Cardiac septum (tissue), 1 donor: ENCODE measurements at regions of chr3 and their contacts with region 1.

Region 1: DNA sequence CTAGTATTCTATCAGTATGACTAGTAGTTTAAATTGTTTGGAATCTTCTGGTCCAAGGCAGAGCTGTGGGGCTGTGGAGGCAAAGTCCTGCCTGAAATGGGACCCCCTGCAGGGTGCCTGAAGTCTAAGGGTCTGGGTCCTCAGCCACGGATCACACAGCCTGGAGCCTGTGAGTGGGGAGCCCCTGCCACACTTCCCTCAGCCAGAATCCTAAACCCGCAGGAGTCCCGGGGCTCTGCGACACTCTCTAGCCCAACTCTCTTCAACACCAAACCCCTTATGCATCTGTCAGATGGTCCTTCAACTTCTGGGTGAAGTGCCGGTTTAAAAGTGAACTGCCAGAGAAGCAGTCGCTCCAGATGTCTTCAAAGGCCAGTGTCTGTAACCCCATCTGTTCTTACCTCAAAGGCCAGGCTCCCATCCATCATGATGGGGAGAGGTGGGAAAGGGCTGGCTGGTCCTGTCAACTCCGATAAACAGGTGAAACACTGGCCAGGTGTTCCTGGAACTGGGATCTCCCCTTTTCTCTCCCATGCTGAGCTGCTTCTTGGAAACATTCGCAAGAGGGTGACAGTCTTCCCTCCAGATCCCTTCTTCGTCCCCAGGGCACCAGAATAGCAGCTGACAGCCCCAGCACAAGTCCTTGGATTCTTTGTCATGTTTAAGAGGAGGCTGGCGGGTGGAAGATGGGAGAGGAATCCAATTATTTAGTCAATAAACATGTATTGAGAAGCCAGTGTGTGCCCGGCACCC is 45.6 kb downstream of the CPN2 start:
- DNase-seq: peak; percentile 35

Region 2: DNA sequence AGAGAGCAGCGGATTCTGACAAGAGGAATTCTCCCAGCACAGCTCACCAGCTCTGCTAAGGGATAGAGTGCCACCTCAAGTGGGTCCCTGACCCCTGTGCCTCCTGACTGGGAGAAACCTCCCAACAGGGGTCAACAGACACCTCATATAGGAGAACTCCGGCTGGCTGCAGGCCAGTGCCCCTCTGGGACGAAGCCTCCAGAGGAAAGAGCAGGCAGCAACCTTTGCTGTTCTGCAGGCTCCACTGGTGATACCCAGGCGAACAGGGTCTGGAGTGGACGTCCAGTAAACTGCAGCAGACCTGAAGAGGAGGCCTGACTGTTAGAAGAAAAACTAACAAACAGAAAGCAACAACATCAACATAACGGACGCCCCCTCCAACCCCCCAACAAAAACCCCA is 1546.9 kb before region 1 on chr3:
- intact Hi-C with region 1: no loop called
- DNase-seq: no peak

Region 3: DNA sequence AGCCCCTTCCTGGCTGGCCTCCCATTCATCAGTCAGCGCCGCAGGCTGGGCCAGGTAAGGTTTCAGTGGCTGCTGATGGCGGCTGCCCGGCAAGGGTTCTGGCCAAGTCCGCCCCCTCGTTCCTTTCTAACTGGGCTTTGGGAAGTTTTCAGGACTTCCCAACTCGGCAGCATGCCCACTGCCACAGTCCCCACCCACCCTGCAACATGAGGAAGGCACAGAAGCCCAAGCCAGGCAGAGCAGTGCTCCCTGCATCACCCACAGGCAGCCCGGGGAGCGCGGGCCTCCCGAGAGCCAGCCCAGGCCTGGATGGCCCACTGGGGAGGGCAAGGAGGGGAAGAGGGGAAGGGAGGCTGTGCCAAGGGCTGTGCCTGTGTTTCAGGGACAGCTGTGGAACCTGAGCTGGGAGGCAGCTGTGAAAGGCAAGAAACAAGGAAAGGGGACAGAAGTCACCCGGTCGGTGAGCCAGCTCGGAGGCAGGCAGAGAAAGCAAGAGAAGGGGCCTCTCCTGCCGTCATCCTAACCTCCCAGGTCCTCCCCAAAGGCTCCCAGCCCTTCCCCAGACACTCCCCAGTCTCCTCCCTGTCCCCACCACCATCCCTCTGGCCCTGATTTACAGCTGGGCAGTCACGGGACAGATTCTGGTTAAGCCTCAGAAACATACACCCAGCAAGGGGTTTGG is 28.3 kb before region 1 on chr3:
- intact Hi-C with region 1: loop called (anchors 2 kb)
- DNase-seq: peak; percentile 76

Region 4: DNA sequence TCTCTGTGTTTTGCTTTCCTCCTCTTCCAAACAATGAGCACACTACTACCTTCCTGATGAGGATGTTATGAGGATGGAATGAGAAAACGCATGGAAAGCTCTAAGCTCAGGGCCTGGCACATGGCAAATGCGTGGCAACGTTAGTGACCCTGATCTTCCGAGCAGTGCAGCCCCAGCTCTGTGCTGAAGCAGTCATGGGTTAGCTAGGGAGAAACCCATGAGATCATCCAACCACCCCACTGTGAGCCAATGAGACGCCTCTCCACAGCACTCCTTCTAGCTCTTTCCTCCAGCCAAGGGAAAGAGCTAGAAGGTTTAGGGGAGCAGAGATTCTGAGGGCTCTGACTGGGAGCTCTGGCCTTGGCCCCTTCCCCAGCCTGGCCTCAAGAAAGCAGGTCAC is 41.1 kb after region 1 on chr3:
- intact Hi-C with region 1: no loop called
- DNase-seq: no peak